Caco-2 (cell line): ENCODE measurements at regions of chr5 and their contacts with region 1.

Region 1: GRCh38 chr5:101390151-101390908 is 487.2 kb upstream of the ST8SIA4 start:
- DNase-seq: peak; percentile 39 to 69
- H3K4me3 ChIP-seq: no peak overlapping the region
- H3K4me3 Mint-ChIP-seq: no peak overlapping the region
- H3K27ac Mint-ChIP-seq: peak overlapping the region; percentile 24
- H3K4me1 ChIP-seq: no peaks in the 10 kb centered on the region
- H3K4me1 Mint-ChIP-seq: no peaks in the 10 kb centered on the region
- H3K27me3 ChIP-seq: no peaks in the 10 kb centered on the region
- H3K27me3 Mint-ChIP-seq: no peaks in the 10 kb centered on the region
- CTCF ChIP-seq: peak; percentile 49 to 75

Region 2: DNA sequence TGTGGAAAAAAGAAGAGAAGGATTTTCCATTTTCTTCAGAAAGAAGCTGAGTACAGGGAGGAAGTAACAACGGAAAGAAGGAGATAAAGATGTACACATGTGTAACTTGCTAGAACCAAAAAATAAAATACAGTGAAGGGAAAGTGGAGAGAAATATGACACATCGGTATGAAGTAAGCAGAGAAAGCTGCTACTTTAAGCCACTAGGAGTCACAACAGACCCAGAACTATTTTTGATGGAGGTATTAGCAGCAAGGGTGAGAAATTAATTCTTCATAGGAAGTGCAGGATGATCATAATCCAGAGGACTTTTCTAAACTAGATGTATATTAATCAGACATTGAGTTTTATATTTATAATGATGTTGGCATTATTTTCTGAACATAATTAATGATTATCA is 766.6 kb before region 1 on chr5:
- CTCF ChIA-PET with region 1: no interaction called
- POLR2A ChIA-PET with region 1: no interaction called
- intact Hi-C with region 1: loop called (anchors 1 kb)
- DNase-seq: peak in 1 of 2 experiments; percentile 10
- H3K4me3 ChIP-seq: no peak overlapping the region
- H3K4me3 Mint-ChIP-seq: no peak overlapping the region
- H3K27ac Mint-ChIP-seq: no peak overlapping the region
- H3K4me1 ChIP-seq: no peaks in the 10 kb centered on the region
- H3K4me1 Mint-ChIP-seq: no peaks in the 10 kb centered on the region
- H3K27me3 ChIP-seq: no peaks in the 10 kb centered on the region
- H3K27me3 Mint-ChIP-seq: no peaks in the 10 kb centered on the region
- CTCF ChIP-seq: peak; percentile 34 to 45

Region 3: GRCh38 chr5:101326766-101327165 is 63.6 kb before region 1 on chr5:
- CTCF ChIA-PET with region 1: no interaction called
- POLR2A ChIA-PET with region 1: no interaction called
- intact Hi-C with region 1: no loop called
- DNase-seq: no peak
- H3K4me3 ChIP-seq: no peak overlapping the region
- H3K4me3 Mint-ChIP-seq: no peak overlapping the region
- H3K27ac Mint-ChIP-seq: no peak overlapping the region
- H3K4me1 ChIP-seq: no peaks in the 10 kb centered on the region
- H3K4me1 Mint-ChIP-seq: no peaks in the 10 kb centered on the region
- H3K27me3 ChIP-seq: no peaks in the 10 kb centered on the region
- H3K27me3 Mint-ChIP-seq: no peaks in the 10 kb centered on the region
- CTCF ChIP-seq: no peak

Region 4: DNA sequence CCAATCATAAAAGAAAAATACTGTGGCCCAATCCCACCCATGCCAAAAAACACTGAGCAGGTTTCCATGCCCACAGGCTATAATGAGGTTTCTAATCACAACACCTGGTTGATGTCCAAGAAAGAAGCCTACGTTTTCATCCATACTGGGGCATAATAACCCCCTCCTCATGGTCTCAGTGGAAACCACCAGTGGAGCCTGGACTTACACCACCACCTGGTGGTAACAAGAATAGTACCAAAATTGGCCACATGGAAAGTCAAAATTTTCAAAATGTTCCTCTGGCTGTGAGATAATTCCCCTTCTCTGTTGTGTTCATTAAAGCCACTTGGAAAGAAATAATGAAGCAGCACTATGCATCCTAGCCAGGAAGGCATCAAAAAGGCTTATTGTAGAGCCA is 200.1 kb after region 1 on chr5:
- CTCF ChIA-PET with region 1: no interaction called
- POLR2A ChIA-PET with region 1: no interaction called
- intact Hi-C with region 1: loop called (anchors 1 kb)
- DNase-seq: peak in 1 of 2 experiments; percentile 13
- H3K4me3 ChIP-seq: no peak overlapping the region
- H3K4me3 Mint-ChIP-seq: no peak overlapping the region
- H3K27ac Mint-ChIP-seq: no peak overlapping the region
- H3K4me1 ChIP-seq: no peaks in the 10 kb centered on the region
- H3K4me1 Mint-ChIP-seq: no peaks in the 10 kb centered on the region
- H3K27me3 ChIP-seq: no peaks in the 10 kb centered on the region
- H3K27me3 Mint-ChIP-seq: no peaks in the 10 kb centered on the region
- CTCF ChIP-seq: peak; percentile 39 to 41